ENCODE measurements at regions of chr14 and their contacts with region 1.

Region 1: DNA sequence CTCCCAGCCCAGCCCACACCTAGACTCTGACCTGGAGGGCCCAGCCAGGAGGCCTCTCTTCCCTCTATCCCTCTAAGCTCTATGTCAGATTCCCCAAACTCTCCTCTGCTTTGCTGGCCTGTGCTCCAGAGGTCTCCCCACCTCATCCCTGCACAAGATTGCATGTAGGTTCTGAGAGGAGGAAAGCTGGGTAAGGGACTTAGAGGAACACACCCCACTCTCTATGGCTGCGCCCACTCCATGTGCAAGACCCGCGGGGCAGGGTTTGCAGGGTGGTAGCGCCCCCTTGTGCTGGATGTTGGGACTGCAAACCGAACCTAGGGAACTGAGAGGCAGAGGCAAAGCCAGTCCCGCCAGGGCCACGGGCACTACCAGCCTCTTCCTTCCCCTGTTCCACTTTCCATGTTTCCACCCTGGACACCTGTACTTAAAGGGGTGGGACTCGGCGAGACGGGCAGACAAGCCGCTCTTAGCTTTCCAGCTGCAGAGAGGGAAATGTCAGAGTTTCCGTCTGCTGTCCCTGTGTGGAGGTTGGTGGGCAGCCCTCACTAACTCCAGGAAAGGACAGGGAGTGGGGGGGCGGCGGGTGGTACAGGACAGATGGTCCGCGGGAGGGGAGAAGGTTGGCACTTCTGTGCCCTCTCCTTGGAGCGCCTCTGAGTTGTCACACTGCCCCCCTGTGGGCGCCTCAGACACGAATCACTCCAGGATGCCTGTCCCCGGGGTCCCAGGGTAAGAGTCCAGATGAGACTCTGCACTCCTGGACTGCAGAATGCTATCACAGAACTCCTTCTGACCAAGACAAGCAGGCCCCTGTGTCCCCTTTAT is 16.8 kb downstream of the MMP14 start:
- DNase-seq: peak; percentile 96
- H3K4me3 ChIP-seq: peak overlapping the region in 3 of 4 donors; percentile 28 to 48 (median 32)
- H3K27ac ChIP-seq: peak overlapping the region; percentile 73 to 83 (median 76)
- H3K4me1 ChIP-seq: peaks cover 22 to 50% (median 36%) of the 10 kb centered on the region in 4 donors
- H3K27me3 ChIP-seq: no peaks in the 10 kb centered on the region
- CTCF ChIP-seq: peak; percentile 86 to 100 (median 95)
- EP300 ChIP-seq: no peak
- POLR2A ChIP-seq: no peak

Region 2: DNA sequence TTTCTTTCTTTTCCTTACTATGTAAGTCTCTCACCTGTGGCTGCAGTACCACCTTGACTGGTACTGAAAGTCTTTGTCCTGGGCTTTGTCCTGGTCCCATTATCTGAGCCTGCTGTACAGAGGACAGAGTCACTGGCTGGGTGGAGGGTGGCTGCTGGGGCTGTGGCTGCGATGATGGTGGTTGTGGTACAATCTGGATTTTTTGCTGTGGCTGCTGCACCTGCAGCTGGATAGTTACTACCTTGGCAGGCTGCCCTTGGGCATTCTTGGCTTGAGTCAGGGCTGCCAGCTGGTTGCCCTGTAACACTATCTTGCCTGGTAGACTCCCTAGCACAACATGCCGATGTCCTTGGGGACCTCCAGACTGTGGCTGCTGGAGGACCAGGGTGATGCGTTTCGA is 1424.2 kb before region 1 on chr14:
- in situ Hi-C with region 1: no loop called
- intact Hi-C with region 1: no loop called
- DNase-seq: no peak
- H3K4me3 ChIP-seq: no peak overlapping the region
- H3K27ac ChIP-seq: no peak overlapping the region
- H3K4me1 ChIP-seq: no peaks in the 10 kb centered on the region
- H3K27me3 ChIP-seq: no peaks in the 10 kb centered on the region
- CTCF ChIP-seq: no peak
- EP300 ChIP-seq: no peak
- POLR2A ChIP-seq: no peak

Region 3: DNA sequence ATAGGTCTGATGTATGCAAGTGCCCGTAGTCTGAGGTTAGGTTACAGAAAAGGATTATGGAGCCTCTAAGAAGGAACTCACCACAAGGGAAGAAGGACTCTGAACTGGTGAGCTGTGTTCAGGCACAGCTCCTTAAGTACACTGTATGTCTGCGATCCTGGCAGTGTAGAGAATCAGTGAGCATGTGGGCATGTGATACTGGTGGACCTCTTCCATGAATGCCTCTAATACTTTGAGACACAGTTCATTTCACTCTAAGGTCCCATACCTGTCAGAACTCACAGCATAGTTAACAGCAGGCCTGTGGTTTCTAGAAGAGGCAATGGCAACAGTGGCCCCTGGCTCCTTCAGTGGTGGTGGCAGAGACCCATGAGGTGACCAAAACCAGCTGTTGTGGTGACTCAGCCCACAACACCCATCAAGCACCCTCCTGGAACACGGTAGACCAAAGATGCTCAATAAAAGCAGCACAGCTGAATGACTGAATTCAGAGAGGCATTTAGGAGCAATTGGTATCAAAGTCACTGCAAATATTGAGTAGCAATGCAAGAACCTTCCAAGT is 202.1 kb before region 1 on chr14:
- in situ Hi-C with region 1: no loop called
- intact Hi-C with region 1: no loop called
- DNase-seq: no peak
- H3K4me3 ChIP-seq: no peak overlapping the region
- H3K27ac ChIP-seq: no peak overlapping the region
- H3K4me1 ChIP-seq: peaks cover 0 to 4% (median 1%) of the 10 kb centered on the region in 4 donors
- H3K27me3 ChIP-seq: no peaks in the 10 kb centered on the region
- CTCF ChIP-seq: no peak
- EP300 ChIP-seq: no peak
- POLR2A ChIP-seq: no peak

Region 4: DNA sequence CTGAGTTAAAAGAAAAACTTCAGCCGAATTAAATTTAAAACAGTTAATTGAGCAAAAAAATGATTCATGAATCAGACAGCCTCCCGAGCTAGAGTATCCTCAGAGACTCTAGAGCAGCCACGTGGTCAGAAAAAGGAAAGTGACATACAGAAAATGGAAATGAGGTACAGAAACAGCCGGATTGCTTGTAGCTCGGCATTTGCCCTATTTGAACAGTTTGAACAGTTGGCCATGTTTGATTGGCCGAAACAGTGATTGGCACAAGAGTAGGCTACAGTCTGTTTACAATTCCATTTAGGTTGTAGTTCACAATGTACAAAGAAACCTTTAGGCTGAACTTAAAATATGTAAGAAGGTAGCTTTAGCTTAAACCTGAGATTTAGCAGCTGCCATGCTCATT is 99.6 kb before region 1 on chr14:
- in situ Hi-C with region 1: no loop called
- intact Hi-C with region 1: no loop called
- DNase-seq: no peak
- H3K4me3 ChIP-seq: no peak overlapping the region
- H3K27ac ChIP-seq: no peak overlapping the region
- H3K4me1 ChIP-seq: no peaks in the 10 kb centered on the region
- H3K27me3 ChIP-seq: no peaks in the 10 kb centered on the region
- CTCF ChIP-seq: no peak
- EP300 ChIP-seq: no peak
- POLR2A ChIP-seq: no peak

Region 5: DNA sequence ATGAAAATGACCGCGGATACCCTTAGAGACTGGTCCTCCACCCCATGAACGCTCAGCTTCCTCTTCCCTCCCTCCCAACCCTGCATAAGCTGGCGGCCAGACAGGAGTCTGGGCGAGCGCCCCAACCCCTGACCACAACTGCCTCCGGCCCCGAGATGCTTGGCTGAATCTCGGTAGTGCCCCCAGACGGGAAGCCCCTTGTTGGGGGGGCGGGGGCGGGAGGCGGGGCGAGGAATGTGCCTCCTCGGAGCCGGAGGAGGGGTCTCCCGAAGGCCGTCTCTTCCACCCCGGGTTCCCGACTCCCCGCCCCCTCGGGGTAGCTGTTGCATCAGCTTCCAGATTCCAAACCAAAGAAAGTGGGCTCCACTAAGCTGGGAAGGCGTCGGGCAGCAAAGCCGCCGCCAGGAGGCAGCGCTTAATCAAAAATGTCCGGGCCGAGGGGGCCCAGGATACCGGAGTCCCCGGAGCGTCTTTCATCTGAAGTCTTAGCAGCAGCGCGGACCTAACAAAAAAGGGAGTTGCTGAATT is 30.5 kb before region 1 on chr14:
- in situ Hi-C with region 1: no loop called
- intact Hi-C with region 1: loop called (anchors 1 kb)
- DNase-seq: peak; percentile 81
- H3K4me3 ChIP-seq: peak overlapping the region; percentile 25 to 48 (median 34)
- H3K27ac ChIP-seq: peak overlapping the region; percentile 45 to 68 (median 64)
- H3K4me1 ChIP-seq: peaks cover 4 to 32% (median 22%) of the 10 kb centered on the region in 4 donors
- H3K27me3 ChIP-seq: no peaks in the 10 kb centered on the region
- CTCF ChIP-seq: peak; percentile 83 to 87 (median 83)
- EP300 ChIP-seq: no peak
- POLR2A ChIP-seq: no peak

Region 6: GRCh38 chr14:22836301-22837113 is 16.6 kb before region 1 on chr14 and contains the start of gene MMP14:
- in situ Hi-C with region 1: no loop called
- intact Hi-C with region 1: loop called (anchors 2 kb)
- DNase-seq: peak; percentile 79
- H3K4me3 ChIP-seq: peak within 1 kb of the TSS; percentile 80 to 98 (median 90)
- H3K27ac ChIP-seq: peak within 1 kb of the TSS; percentile 94 to 98 (median 96)
- H3K4me1 ChIP-seq: peaks cover 10 to 42% (median 24%) of the 10 kb centered on the region in 4 donors
- H3K27me3 ChIP-seq: no peaks in the 10 kb centered on the region
- CTCF ChIP-seq: peak in 4 of 5 experiments; percentile 25 to 30 (median 28)
- EP300 ChIP-seq: no peak
- POLR2A ChIP-seq: peak; percentile 64
- total RNA-seq, gene MMP14: 59.5 to 91.6 (median 73.1) TPM

Region 7: DNA sequence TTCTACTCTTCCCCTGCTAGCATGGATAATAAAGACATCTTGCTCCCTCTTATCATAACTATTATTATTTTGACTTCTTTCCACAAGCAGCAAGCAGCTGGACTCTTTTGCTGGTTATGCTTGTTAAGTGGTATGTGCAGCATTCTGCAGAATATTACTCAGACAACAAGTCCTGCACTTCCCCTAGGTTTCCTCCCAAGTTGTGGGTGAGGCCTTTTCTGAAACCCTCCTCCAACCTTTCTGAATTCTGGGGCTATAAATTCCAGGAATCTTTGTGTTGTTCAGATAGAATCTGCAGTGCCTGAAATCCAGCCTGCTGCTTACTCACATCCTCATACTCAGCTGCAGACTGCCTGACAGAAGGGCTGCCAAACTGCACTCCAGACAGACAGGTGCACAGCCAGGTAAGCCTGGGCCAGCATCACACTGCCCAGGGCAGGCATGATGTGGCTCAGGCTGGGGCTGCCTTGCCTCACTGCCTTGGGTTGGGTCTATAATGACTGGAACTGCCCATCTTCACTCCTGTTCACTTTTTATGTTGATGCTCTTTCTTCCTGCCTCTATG is 776.8 kb after region 1 on chr14:
- in situ Hi-C with region 1: no loop called
- intact Hi-C with region 1: no loop called
- DNase-seq: no peak
- H3K4me3 ChIP-seq: no peak overlapping the region
- H3K27ac ChIP-seq: no peak overlapping the region
- H3K4me1 ChIP-seq: peaks cover 0 to 9% (median 3%) of the 10 kb centered on the region in 4 donors
- H3K27me3 ChIP-seq: no peaks in the 10 kb centered on the region
- CTCF ChIP-seq: no peak
- EP300 ChIP-seq: no peak
- POLR2A ChIP-seq: no peak

Measured in transverse colon (tissue), 4 donors.